Endothelial cell of umbilical vein (primary cell): ENCODE measurements at regions of chr17 and their contacts with region 1.

Region 1: GRCh38 chr17:57243171-57243948 is 13.0 kb upstream of the MSI2 start:
- DNase-seq: peak; percentile 66
- H3K4me3 ChIP-seq: no peak overlapping the region
- H3K27ac ChIP-seq: no peak overlapping the region
- H3K4me1 ChIP-seq: no peaks in the 10 kb centered on the region
- H3K27me3 ChIP-seq: peaks cover 13 to 16% of the 10 kb centered on the region in 2 experiments
- CTCF ChIP-seq: peak; percentile 100
- POLR2A ChIP-seq: no peak

Region 2: DNA sequence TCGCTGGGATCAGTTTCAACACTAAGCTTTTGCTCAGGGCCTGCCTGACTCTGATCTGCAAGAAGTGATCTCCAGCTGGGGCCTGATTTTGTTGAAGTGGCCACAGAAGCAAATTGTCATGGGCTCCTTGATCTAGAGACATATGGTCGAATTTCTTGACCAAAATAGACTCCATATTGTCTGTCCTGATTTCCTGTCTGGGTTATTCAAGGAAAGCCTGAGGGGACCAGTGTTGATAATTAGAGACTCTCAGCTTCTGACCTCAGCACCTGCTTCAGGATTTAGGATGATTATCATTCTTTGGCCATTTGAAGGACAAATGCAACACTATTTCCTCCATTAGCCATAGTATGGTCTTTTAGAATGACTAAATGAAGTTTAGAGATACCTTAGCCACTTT is 35.9 kb before region 1 on chr17:
- CTCF ChIA-PET with region 1: interaction called, 11 read pairs
- POLR2A ChIA-PET with region 1: no interaction called
- dilution Hi-C with region 1: no loop called
- intact Hi-C with region 1: no loop called
- DNase-seq: no peak
- H3K4me3 ChIP-seq: no peak overlapping the region
- H3K27ac ChIP-seq: no peak overlapping the region
- H3K4me1 ChIP-seq: peaks cover 19% of the 10 kb centered on the region
- H3K27me3 ChIP-seq: peaks cover 2% of the 10 kb centered on the region in 2 experiments
- CTCF ChIP-seq: no peak
- POLR2A ChIP-seq: no peak

Region 3: DNA sequence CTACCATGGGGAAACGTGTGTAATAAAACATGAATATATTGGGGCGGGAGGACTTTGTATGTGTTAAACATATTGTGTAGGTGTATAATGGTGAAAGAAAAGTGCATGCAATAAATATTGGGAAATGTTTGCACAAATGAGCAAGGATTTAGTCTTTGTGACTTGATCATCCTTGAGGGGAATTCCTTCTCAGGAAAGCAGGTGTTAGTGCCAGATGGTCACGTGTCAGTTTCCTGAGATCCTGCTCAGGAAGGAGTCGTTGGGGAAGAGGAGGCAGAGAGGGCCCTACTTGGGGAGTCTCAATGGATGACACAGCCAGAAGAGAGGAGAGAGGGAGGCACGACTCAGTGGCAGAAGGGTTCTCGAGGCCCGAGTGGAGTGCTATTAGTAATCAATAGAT is 66.1 kb after region 1 on chr17:
- CTCF ChIA-PET with region 1: interaction called, 11 read pairs
- POLR2A ChIA-PET with region 1: no interaction called
- dilution Hi-C with region 1: no loop called
- intact Hi-C with region 1: no loop called
- DNase-seq: no peak
- H3K4me3 ChIP-seq: no peak overlapping the region
- H3K27ac ChIP-seq: no peak overlapping the region
- H3K4me1 ChIP-seq: no peaks in the 10 kb centered on the region
- H3K27me3 ChIP-seq: no peaks in the 10 kb centered on the region
- CTCF ChIP-seq: no peak
- POLR2A ChIP-seq: no peak

Region 4: GRCh38 chr17:57486873-57487301 is 243.5 kb after region 1 on chr17:
- CTCF ChIA-PET with region 1: interaction called, 10 read pairs
- POLR2A ChIA-PET with region 1: no interaction called
- dilution Hi-C with region 1: no loop called
- intact Hi-C with region 1: no loop called
- DNase-seq: no peak
- H3K4me3 ChIP-seq: no peak overlapping the region
- H3K27ac ChIP-seq: no peak overlapping the region
- H3K4me1 ChIP-seq: no peaks in the 10 kb centered on the region
- H3K27me3 ChIP-seq: no peaks in the 10 kb centered on the region
- CTCF ChIP-seq: no peak
- POLR2A ChIP-seq: no peak

Region 5: DNA sequence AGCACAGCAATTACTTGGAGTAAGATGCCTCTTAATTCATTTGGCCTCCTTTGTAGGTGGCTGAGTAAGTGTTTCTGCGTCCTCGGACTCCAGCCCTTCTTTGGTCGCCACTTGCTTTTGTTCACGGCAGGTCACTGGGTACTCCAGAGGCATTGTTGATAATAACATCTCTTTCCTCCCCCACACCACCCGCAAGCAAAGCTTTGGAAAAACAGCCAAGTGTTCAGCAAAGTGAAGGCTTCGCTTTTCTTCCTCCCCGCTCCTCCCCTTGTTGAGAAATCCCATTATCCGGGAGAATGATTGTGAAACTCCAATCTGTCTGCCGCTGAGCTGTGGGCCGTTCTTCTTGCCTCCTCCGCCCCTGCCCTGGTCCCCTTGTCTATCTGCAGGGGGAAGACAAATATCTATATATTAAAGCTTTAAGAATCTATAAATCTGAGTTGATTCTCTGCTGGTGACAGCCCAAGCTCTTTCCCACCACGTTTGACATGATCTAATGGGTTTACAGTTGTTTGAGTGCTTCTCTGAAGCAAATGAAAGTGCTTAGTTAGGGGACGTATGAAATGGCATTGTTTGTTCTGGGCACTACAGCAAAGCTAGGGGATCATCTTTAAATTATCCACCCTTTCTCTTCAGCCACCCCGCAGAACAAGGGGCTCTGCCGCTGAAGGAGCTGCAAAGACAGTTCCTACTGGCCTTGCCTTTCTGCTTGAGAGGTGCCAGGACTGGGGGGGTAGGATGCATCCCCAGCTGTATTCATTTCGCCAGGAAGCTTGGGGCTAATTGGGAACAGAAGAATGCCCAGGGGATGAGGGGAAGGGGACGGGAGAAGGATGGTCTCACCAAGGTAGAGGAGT is 334.6 kb after region 1 on chr17:
- CTCF ChIA-PET with region 1: interaction called, 17 read pairs
- POLR2A ChIA-PET with region 1: no interaction called
- dilution Hi-C with region 1: no loop called
- intact Hi-C with region 1: no loop called
- DNase-seq: no peak
- H3K4me3 ChIP-seq: no peak overlapping the region
- H3K27ac ChIP-seq: no peak overlapping the region
- H3K4me1 ChIP-seq: no peaks in the 10 kb centered on the region
- H3K27me3 ChIP-seq: no peaks in the 10 kb centered on the region
- CTCF ChIP-seq: no peak
- POLR2A ChIP-seq: no peak

Region 6: GRCh38 chr17:57739402-57740392 is 496.3 kb after region 1 on chr17:
- CTCF ChIA-PET with region 1: interaction called, 27 read pairs
- POLR2A ChIA-PET with region 1: no interaction called
- dilution Hi-C with region 1: no loop called
- intact Hi-C with region 1: no loop called
- DNase-seq: no peak
- H3K4me3 ChIP-seq: no peak overlapping the region
- H3K27ac ChIP-seq: no peak overlapping the region
- H3K4me1 ChIP-seq: no peaks in the 10 kb centered on the region
- H3K27me3 ChIP-seq: peaks cover 9 to 10% of the 10 kb centered on the region in 2 experiments
- CTCF ChIP-seq: peak; percentile 5 to 8
- POLR2A ChIP-seq: no peak